GM12878 (cell line): ENCODE measurements at regions of chr9 and their contacts with region 1.

Region 1: DNA sequence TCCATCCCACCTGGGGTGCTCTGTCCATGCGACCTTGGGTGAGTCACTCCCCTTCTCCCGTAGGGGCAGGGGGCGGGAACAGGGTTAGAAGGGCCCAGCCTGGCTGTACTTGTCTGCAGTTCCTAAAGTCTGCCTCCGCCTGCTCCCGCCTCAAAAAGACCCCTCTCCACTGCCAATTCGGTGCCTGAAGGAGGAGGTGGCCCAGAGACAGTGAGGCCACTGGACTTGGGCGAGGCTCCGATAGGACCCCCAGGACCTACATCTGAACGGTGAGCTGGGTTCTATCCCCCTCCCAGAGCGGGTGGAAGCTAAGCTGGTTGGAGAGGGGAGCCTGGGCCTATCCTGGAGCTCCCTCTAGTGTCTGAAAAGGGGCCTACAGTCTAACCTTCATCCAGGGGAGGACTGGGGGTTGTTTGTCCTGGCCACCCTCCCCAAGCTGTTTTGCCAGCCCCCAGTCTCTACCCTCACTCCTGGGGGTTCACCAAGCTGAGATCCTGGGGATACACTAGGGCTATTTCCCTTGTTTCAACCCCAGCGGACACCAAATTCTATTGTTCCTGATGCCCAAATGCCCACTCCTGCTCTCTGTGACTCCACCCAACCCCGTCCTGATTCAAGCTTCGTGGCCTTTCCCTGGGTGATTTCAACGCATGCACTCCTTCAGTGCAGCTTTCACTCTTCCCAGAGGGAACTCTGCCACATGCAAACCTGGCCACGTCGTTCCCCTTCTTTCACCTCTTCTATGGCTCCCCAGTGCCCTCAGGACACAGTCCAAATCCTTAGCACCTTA is 6.1 kb upstream of the CRB2 start:
- DNase-seq: no peak
- ATAC-seq: peak; percentile 83
- H3K4me3 ChIP-seq: no peak overlapping the region
- H3K27ac ChIP-seq: no peak overlapping the region
- H3K4me1 ChIP-seq: peaks cover 14% of the 10 kb centered on the region
- H3K27me3 ChIP-seq: no peaks in the 10 kb centered on the region; a peak in 1 of 4 replicates
- CTCF ChIP-seq: peak; percentile 95 to 98 (median 97); a peak in 5 of 6 replicates
- EP300 ChIP-seq: no peak
- POLR2A ChIP-seq: no peak
- RAD21 ChIP-seq: peak; percentile 99

Region 2: DNA sequence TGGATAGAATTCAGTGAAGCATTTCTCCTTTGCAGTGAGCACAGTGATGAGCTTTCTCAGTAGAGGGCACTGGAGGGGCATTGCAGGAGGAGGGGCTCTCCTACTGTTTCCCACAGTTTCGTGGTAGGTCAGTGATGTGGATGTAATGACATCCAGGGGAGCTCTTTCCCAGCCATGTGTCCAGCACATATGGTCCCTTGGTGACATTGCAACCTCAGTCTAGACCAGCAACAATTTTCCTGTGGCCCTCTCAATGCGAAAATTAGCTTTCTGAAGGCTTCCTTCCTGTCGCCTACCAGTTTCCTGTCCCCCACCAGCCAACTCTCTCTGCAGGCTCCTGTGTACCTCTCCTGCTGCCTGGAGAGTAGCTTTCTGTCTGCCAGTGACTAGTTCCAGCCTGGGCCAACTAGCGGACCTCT is 514.6 kb before region 1 on chr9:
- CTCF ChIA-PET with region 1: interaction called, 4 read pairs
- POLR2A ChIA-PET with region 1: no interaction called
- RAD21 ChIA-PET with region 1: interaction called, 3 read pairs
- SMC1A ChIA-PET with region 1: no interaction called
- in situ Hi-C with region 1: no loop called
- intact Hi-C with region 1: loop called (anchors 10 kb)
- DNase-seq: no peak
- ATAC-seq: peak; percentile 41
- H3K4me3 ChIP-seq: no peak overlapping the region
- H3K27ac ChIP-seq: no peak overlapping the region
- H3K4me1 ChIP-seq: peaks cover 4% of the 10 kb centered on the region
- H3K27me3 ChIP-seq: no peaks in the 10 kb centered on the region
- CTCF ChIP-seq: peak in 1 of 3 experiments; percentile 21; a peak in 2 of 6 replicates
- EP300 ChIP-seq: no peak
- POLR2A ChIP-seq: no peak
- RAD21 ChIP-seq: peak; percentile 20; the same call in 1 of the 2 replicates

Region 3: DNA sequence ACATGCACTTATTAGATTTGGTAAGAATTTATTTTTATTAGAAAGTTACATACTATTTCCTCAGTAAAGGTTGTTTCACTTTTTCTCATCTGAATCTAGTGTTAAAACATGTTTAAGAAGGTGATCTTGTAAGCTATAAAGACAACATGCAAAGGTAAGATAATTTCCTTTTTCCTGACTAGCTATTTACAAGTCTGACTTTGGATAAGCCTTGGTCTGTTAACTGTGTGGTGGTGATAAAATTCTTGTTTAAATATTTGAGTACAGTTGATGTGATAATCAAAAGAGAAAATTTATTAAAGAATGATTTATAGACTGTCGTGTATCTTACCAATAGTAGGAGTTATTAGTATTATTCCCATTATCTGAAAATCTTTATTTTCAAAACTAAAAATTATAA is 353.3 kb before region 1 on chr9:
- CTCF ChIA-PET with region 1: interaction called, 13 read pairs
- POLR2A ChIA-PET with region 1: no interaction called
- RAD21 ChIA-PET with region 1: interaction called, 7 read pairs
- SMC1A ChIA-PET with region 1: interaction called, 3 read pairs
- in situ Hi-C with region 1: no loop called
- intact Hi-C with region 1: loop called (anchors 10 kb)
- DNase-seq: no peak
- ATAC-seq: no peak
- H3K4me3 ChIP-seq: no peak overlapping the region
- H3K27ac ChIP-seq: no peak overlapping the region
- H3K4me1 ChIP-seq: no peaks in the 10 kb centered on the region
- H3K27me3 ChIP-seq: no peaks in the 10 kb centered on the region
- CTCF ChIP-seq: no peak
- EP300 ChIP-seq: no peak
- POLR2A ChIP-seq: no peak
- RAD21 ChIP-seq: no peak

Region 4: GRCh38 chr9:123102375-123103110 is 247.3 kb before region 1 on chr9:
- CTCF ChIA-PET with region 1: interaction called, 56 read pairs
- POLR2A ChIA-PET with region 1: no interaction called
- RAD21 ChIA-PET with region 1: interaction called, 11 read pairs
- SMC1A ChIA-PET with region 1: interaction called, 32 read pairs
- in situ Hi-C with region 1: no loop called
- intact Hi-C with region 1: loop called (anchors 1 kb)
- DNase-seq: no peak
- ATAC-seq: 0 out of 3 replicates have a peak, but pooled peaks have one; percentile 20
- H3K4me3 ChIP-seq: no peak overlapping the region
- H3K27ac ChIP-seq: no peak overlapping the region
- H3K4me1 ChIP-seq: no peaks in the 10 kb centered on the region
- H3K27me3 ChIP-seq: no peaks in the 10 kb centered on the region
- CTCF ChIP-seq: peak; percentile 17 to 34 (median 22); a peak in 3 of 6 replicates
- EP300 ChIP-seq: no peak
- POLR2A ChIP-seq: no peak
- RAD21 ChIP-seq: peak; percentile 42

Region 5: GRCh38 chr9:123261006-123261677 is 88.7 kb before region 1 on chr9:
- CTCF ChIA-PET with region 1: interaction called, 15 read pairs
- POLR2A ChIA-PET with region 1: interaction called, 4 read pairs
- RAD21 ChIA-PET with region 1: interaction called, 12 read pairs
- SMC1A ChIA-PET with region 1: interaction called, 4 read pairs
- in situ Hi-C with region 1: no loop called
- intact Hi-C with region 1: no loop called
- DNase-seq: no peak
- ATAC-seq: no peak
- H3K4me3 ChIP-seq: no peak overlapping the region
- H3K27ac ChIP-seq: no peak overlapping the region
- H3K4me1 ChIP-seq: peaks cover 24% of the 10 kb centered on the region
- H3K27me3 ChIP-seq: no peaks in the 10 kb centered on the region
- CTCF ChIP-seq: no peak
- EP300 ChIP-seq: no peak
- POLR2A ChIP-seq: no peak
- RAD21 ChIP-seq: no peak

Region 6: DNA sequence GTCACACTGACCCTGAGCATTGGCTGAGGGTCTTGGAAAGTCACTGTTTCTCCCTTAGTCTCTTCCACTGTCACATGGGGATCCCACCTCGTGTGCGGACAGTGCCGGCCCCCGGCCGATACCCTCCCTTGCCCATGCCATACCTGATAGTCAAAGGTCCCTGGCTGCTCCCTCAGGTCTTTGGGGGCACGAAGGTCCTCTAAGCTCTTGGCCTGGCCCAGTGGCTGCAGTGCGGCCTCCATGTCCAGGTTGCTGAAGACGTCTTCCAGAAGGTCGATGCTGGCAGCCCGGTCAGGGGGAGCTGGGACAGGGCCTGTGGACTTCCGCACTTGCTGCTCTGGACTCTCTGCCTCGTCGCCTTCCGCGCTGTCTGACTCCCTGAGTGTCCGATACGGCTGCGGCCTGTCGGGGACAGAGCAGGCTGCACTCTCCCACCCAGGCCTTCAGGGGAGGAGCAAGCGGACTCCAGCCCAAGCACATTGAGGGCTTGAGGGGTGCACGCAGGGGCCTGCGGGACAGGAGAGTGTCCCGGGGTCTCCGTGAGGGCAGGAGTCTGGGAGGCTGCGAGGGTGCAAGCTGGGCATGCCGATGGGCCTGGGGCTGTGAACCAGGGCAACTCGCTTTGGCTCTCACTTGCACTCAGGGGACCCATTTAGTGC is 33.8 kb after region 1 on chr9:
- CTCF ChIA-PET with region 1: interaction called, 58 read pairs
- POLR2A ChIA-PET with region 1: interaction called, 3 read pairs
- RAD21 ChIA-PET with region 1: interaction called, 17 read pairs
- SMC1A ChIA-PET with region 1: interaction called, 21 read pairs
- in situ Hi-C with region 1: loop called (anchors 5 kb)
- intact Hi-C with region 1: loop called (anchors 1 kb)
- DNase-seq: no peak
- ATAC-seq: no peak
- H3K4me3 ChIP-seq: no peak overlapping the region
- H3K27ac ChIP-seq: no peak overlapping the region
- H3K4me1 ChIP-seq: no peaks in the 10 kb centered on the region
- H3K27me3 ChIP-seq: no peaks in the 10 kb centered on the region
- CTCF ChIP-seq: no peak
- EP300 ChIP-seq: no peak
- POLR2A ChIP-seq: no peak
- RAD21 ChIP-seq: no peak

Region 7: GRCh38 chr9:123523001-123523400 is 173.1 kb after region 1 on chr9:
- CTCF ChIA-PET with region 1: no interaction called
- POLR2A ChIA-PET with region 1: no interaction called
- RAD21 ChIA-PET with region 1: no interaction called
- SMC1A ChIA-PET with region 1: no interaction called
- in situ Hi-C with region 1: no loop called
- intact Hi-C with region 1: no loop called
- DNase-seq: no peak
- ATAC-seq: no peak
- H3K4me3 ChIP-seq: no peak overlapping the region
- H3K27ac ChIP-seq: no peak overlapping the region
- H3K4me1 ChIP-seq: no peaks in the 10 kb centered on the region
- H3K27me3 ChIP-seq: no peaks in the 10 kb centered on the region
- CTCF ChIP-seq: no peak
- EP300 ChIP-seq: no peak
- POLR2A ChIP-seq: no peak
- RAD21 ChIP-seq: no peak